Head of caudate nucleus (tissue), 42 donors: ENCODE measurements at regions of chr7 and their contacts with region 1.

Region 1: GRCh38 chr7:149195180-149196150 is at the start of gene ZNF282:
- DNase-seq: peak; percentile 79 to 96 (median 90)

Region 2: GRCh38 chr7:148698397-148699023 is 497.0 kb before region 1 on chr7 and contains the start of gene CUL1:
- intact Hi-C with region 1: no loop called
- DNase-seq: peak; percentile 25 to 91 (median 81)

Region 3: DNA sequence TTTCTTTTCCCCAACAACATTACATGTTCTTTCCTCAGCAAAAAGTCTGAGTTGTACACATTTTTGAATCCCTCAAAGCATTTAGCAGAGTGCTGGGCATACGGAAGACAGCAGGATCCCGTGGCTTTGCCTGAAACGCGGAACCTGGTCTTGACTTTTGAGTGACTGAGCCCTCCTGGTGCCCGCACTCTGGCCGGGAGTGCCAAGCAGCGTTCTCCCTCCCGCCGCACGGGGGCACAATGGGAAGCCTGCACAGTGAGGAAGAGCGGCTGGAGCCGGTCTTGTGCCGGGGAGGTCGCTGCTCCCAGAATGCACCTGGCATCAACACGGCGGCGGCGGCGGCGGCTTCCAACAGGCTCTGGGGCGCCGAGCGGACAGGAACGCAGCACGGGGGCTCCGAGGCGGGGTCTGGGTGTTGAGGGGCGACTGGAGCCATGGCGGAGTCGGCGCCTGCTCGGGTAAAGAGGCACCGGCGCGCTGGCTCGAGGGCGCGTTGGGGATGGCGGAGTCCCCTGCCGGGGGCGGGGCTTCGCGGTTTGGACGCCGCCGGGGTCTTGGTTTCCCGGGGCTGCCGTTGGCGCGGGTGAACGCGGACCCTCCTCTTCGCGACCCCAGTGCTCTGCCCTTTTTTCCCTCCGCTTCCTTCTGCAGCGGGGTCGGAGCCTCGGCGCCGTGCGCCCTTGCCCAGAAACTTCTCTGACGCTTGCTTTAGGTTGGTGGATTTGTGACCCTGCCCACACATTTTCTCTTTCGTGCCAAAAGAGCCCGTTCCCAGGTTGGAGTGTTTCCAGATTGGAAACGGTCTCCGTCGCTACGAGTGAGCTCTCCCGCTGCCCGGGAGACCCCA is 44.1 kb after region 1 on chr7 and contains the start of gene ZNF212:
- intact Hi-C with region 1: loop called (anchors 5 kb)
- DNase-seq: peak; percentile 80 to 97 (median 93)